ENCODE measurements at regions of chr19 and their contacts with region 1.

Region 1: GRCh38 chr19:49391581-49392399 is 3.7 kb downstream of the KASH5 start:
- DNase-seq: peak; percentile 94
- H3K4me3 Mint-ChIP-seq: no peak overlapping the region
- H3K27ac Mint-ChIP-seq: no peak overlapping the region
- H3K4me1 Mint-ChIP-seq: peaks cover 9% of the 10 kb centered on the region
- H3K27me3 Mint-ChIP-seq: peaks cover 5% of the 10 kb centered on the region

Region 2: GRCh38 chr19:48795055-48795684 is 596.6 kb before region 1 on chr19:
- intact Hi-C with region 1: no loop called
- DNase-seq: peak; percentile 95
- H3K4me3 Mint-ChIP-seq: peak overlapping the region; percentile 95
- H3K27ac Mint-ChIP-seq: peak overlapping the region; percentile 90
- H3K4me1 Mint-ChIP-seq: peaks cover 12% of the 10 kb centered on the region
- H3K27me3 Mint-ChIP-seq: no peaks in the 10 kb centered on the region

Region 3: DNA sequence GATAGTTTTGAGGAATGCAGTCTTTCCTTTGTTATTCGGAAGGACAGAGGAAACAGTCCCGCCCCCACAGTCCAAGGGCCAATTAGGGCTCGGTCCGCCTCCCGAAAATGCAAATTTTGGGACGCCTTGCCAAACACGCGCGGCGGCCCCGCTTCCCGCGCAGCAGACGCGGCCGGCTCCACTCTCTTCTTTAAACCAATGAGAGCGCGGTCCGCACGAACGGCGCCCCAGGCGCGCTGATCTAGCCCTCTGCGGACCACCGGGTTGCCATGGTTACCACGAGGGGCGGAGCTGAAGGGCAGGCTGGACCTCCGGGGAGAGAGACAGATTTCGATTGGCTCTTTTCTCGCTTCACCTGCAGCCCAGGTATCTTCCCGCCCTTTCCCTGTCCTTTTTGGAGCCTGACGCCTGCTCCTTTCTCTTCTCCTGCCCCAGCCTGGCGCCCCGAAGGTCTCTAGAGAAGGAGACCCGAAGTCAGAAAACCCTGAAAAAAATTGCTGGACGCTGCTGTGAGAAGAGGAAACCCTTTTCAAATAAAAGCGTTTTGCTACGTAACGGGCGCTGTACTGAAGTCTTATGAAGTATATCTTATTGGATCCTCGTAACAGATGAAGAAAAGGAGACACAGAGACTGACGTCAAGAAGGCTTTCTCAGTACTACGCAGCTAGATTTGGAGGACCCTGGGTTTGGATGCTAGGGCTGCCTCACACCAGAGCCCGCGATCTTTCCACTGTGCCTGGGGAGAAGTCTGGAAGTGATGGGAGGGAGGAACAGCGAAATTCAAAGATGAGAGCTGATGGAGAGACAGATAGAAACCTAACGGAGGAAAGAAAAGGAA is 29.5 kb after region 1 on chr19:
- intact Hi-C with region 1: loop called (anchors 2 kb)
- DNase-seq: peak; percentile 88
- H3K4me3 Mint-ChIP-seq: peak overlapping the region; percentile 62
- H3K27ac Mint-ChIP-seq: peak overlapping the region; percentile 42
- H3K4me1 Mint-ChIP-seq: peaks cover 38% of the 10 kb centered on the region
- H3K27me3 Mint-ChIP-seq: peaks cover 83% of the 10 kb centered on the region

Region 4: DNA sequence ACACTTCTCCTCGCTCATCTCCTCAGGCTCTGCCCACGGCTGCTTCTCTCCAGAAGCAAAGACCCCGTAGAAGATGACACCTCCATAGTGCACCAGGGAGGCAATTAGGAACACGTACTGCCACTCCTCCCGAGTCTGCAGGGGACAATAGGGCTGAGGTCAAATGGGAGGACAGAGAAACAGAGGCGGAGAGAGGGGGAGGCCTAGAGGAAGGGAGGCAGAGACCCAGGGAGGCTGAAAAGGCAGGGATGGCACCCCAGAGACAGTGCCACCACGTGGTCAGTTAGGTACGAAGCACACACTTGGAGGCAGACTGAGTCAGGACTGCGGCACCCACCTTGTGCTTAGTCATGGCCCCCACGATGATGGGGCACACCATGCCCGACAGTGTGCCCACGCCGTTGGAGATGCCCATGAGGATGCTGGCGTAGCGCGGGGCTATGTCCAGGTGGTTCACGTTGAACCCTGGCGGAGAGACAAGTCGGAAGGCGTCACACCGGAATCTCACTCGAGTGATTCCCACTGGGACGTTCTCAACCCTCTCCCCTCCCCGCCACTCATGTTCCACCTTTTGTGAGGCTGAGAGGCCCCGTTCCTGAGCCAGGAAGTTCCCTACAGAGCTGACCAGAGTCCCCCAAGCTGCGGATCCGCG is 39.0 kb after region 1 on chr19:
- intact Hi-C with region 1: loop called (anchors 2 kb)
- DNase-seq: peak; percentile 74
- H3K4me3 Mint-ChIP-seq: no peak overlapping the region
- H3K27ac Mint-ChIP-seq: no peak overlapping the region
- H3K4me1 Mint-ChIP-seq: peaks cover 46% of the 10 kb centered on the region
- H3K27me3 Mint-ChIP-seq: peaks cover 85% of the 10 kb centered on the region

Region 5: GRCh38 chr19:49443366-49444099 is 51.7 kb after region 1 on chr19:
- intact Hi-C with region 1: loop called (anchors 1 kb)
- DNase-seq: peak; percentile 98
- H3K4me3 Mint-ChIP-seq: peak overlapping the region; percentile 89
- H3K27ac Mint-ChIP-seq: peak overlapping the region; percentile 88
- H3K4me1 Mint-ChIP-seq: peaks cover 45% of the 10 kb centered on the region
- H3K27me3 Mint-ChIP-seq: peaks cover 39% of the 10 kb centered on the region

Region 6: GRCh38 chr19:49473868-49474544 is 82.2 kb after region 1 on chr19 and contains the start of gene FLT3LG:
- intact Hi-C with region 1: loop called (anchors 1 kb)
- DNase-seq: peak; percentile 99
- H3K4me3 Mint-ChIP-seq: peak within 1 kb of the TSS; percentile 97
- H3K27ac Mint-ChIP-seq: peak within 1 kb of the TSS; percentile 90
- H3K4me1 Mint-ChIP-seq: peaks cover 54% of the 10 kb centered on the region
- H3K27me3 Mint-ChIP-seq: no peaks in the 10 kb centered on the region
- total RNA-seq, gene FLT3LG: 51.8 and 57.6 TPM in 2 replicates